Naive thymus-derived CD4-positive, alpha-beta T cell (primary cell): ENCODE measurements at regions of chr11 and their contacts with region 1.

Region 1: GRCh38 chr11:13868710-13869397 is 93.7 kb upstream of the SPON1 start:
- DNase-seq: peak in 7 of 9 donors; percentile 73 to 92 (median 88)
- ATAC-seq: peak; percentile 96
- H3K4me3 ChIP-seq: no peak overlapping the region
- H3K4me3 Mint-ChIP-seq: peak overlapping the region in 9 of 10 donors; percentile 2 to 70 (median 40)
- H3K27ac ChIP-seq: peak overlapping the region; percentile 87
- H3K27ac Mint-ChIP-seq: peak overlapping the region; percentile 86 to 97 (median 92)
- H3K4me1 ChIP-seq: peaks cover 9 to 19% of the 10 kb centered on the region in 2 donors
- H3K4me1 Mint-ChIP-seq: peaks cover 19 to 56% (median 43%) of the 10 kb centered on the region in 7 donors
- H3K27me3 ChIP-seq: no peaks in the 10 kb centered on the region
- H3K27me3 Mint-ChIP-seq: peaks cover 0 to 14% (median 0%) of the 10 kb centered on the region in 5 donors

Region 2: DNA sequence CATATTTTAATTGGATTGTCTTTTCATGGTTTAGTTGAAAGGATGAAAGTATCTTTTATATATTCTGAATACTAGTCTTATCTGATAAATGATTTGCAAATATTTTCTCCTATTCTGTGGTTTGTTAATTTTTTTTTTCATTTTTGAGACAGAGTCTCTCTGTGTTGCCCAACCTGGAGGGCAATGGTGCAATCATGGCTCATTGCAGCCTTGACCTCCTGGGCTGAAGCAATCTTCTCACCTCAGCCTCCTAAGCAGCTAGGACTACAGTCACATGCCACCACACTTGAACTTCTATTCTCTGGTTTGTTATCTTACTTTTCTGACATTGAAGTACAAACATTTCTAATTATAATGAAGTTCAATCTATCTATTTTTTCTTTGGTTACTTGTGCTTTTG is 230.4 kb before region 1 on chr11:
- CTCF ChIA-PET with region 1: no interaction called
- POLR2A ChIA-PET with region 1: no interaction called
- intact Hi-C with region 1: no loop called
- DNase-seq: no peak
- ATAC-seq: no peak
- H3K4me3 ChIP-seq: no peak overlapping the region
- H3K4me3 Mint-ChIP-seq: no peak overlapping the region
- H3K27ac ChIP-seq: no peak overlapping the region
- H3K27ac Mint-ChIP-seq: no peak overlapping the region
- H3K4me1 ChIP-seq: no peaks in the 10 kb centered on the region
- H3K4me1 Mint-ChIP-seq: no peaks in the 10 kb centered on the region
- H3K27me3 ChIP-seq: no peaks in the 10 kb centered on the region
- H3K27me3 Mint-ChIP-seq: peaks cover 23 to 48% (median 26%) of the 10 kb centered on the region in 5 donors

Region 3: GRCh38 chr11:13880634-13881033 is 11.8 kb after region 1 on chr11:
- CTCF ChIA-PET with region 1: interaction called, 3 read pairs
- POLR2A ChIA-PET with region 1: interaction called, 10 read pairs
- intact Hi-C with region 1: no loop called
- DNase-seq: no peak
- ATAC-seq: no peak
- H3K4me3 ChIP-seq: no peak overlapping the region
- H3K4me3 Mint-ChIP-seq: no peak overlapping the region
- H3K27ac ChIP-seq: no peak overlapping the region
- H3K27ac Mint-ChIP-seq: peak overlapping the region in 3 of 9 donors; percentile 30 to 74 (median 33)
- H3K4me1 ChIP-seq: no peaks in the 10 kb centered on the region
- H3K4me1 Mint-ChIP-seq: peaks cover 0 to 22% (median 7%) of the 10 kb centered on the region in 7 donors
- H3K27me3 ChIP-seq: no peaks in the 10 kb centered on the region
- H3K27me3 Mint-ChIP-seq: peaks cover 0 to 3% (median 0%) of the 10 kb centered on the region in 5 donors